Activated B cell treated with CpG ODN at 0.5 μM for 24 hours (primary cell): ENCODE measurements at regions of chr4 and their contacts with region 1.

Region 1: GRCh38 chr4:173168396-173169177 is at the start of gene GALNT7:
- DNase-seq: peak; percentile 46
- ATAC-seq: peak; percentile 45
- H3K4me3 Mint-ChIP-seq: peak within 1 kb of the TSS; percentile 96
- H3K27ac Mint-ChIP-seq: peak within 1 kb of the TSS; percentile 85
- H3K4me1 Mint-ChIP-seq: peaks cover 39% of the 10 kb centered on the region
- H3K27me3 Mint-ChIP-seq: no peaks in the 10 kb centered on the region
- CTCF ChIP-seq: no peak
- total RNA-seq, gene GALNT7: 15.3 and 16.9 TPM in 2 replicates

Region 2: DNA sequence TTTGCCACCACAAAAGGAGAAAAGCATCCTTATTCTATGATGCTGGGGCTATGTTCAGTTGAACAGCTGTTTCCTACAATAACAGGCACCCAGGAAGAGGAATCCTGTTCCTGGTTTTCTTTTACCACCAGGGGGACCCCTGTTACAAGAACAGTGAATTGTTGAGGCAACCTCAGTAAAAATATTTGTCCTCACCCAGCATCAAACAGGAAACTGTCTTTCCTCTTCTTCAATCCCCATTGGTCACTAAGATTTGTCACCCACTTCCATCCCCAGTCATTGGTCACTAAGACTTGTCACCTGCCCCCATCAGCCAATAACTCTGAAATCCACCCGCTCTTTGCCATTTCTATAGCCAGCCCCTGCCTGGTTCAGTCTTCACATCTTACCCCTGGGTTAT is 143.5 kb before region 1 on chr4:
- CTCF ChIA-PET with region 1: interaction called, 3 read pairs
- POLR2A ChIA-PET with region 1: no interaction called
- intact Hi-C with region 1: loop called (anchors 1 kb)
- DNase-seq: no peak
- ATAC-seq: no peak
- H3K4me3 Mint-ChIP-seq: no peak overlapping the region
- H3K27ac Mint-ChIP-seq: no peak overlapping the region
- H3K4me1 Mint-ChIP-seq: peaks cover 3% of the 10 kb centered on the region
- H3K27me3 Mint-ChIP-seq: no peaks in the 10 kb centered on the region
- CTCF ChIP-seq: no peak

Region 3: DNA sequence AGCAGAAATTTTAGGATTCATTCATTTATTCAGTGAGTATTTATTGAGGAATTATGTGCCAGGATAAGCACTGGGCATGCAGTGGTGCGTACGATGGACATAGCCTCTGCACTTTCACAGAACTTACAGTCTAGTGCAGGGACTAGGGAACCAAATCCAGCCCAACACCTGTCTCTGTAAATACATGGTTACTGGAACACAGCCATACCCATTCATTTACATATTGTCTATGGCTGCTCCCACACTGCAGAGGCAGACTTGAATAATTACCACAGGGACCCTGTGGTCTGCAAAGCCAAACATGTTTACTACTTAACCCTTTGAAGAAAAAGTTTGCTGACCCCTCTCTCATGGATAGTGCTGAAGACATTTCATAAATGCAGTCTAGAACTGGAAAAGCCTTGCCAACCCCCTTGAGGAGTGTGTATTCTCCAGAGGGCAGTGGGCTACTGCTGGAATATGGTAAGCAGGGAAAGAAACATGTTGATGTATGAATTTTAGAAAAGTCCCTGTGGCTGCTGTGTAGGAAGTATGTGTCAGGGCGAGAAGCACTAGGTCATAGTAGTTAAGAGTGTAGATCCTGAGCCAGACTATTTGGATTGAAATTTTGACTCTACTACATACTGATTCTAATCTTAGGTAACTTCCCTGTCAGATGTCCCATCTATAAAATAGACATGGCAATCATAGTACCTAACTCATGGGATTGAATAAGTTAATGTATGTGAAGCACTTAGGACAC is 75.5 kb after region 1 on chr4:
- CTCF ChIA-PET with region 1: interaction called, 3 read pairs
- POLR2A ChIA-PET with region 1: no interaction called
- intact Hi-C with region 1: loop called (anchors 2 kb)
- DNase-seq: no peak
- ATAC-seq: no peak
- H3K4me3 Mint-ChIP-seq: no peak overlapping the region
- H3K27ac Mint-ChIP-seq: no peak overlapping the region
- H3K4me1 Mint-ChIP-seq: peaks cover 54% of the 10 kb centered on the region
- H3K27me3 Mint-ChIP-seq: no peaks in the 10 kb centered on the region
- CTCF ChIP-seq: no peak

Region 4: DNA sequence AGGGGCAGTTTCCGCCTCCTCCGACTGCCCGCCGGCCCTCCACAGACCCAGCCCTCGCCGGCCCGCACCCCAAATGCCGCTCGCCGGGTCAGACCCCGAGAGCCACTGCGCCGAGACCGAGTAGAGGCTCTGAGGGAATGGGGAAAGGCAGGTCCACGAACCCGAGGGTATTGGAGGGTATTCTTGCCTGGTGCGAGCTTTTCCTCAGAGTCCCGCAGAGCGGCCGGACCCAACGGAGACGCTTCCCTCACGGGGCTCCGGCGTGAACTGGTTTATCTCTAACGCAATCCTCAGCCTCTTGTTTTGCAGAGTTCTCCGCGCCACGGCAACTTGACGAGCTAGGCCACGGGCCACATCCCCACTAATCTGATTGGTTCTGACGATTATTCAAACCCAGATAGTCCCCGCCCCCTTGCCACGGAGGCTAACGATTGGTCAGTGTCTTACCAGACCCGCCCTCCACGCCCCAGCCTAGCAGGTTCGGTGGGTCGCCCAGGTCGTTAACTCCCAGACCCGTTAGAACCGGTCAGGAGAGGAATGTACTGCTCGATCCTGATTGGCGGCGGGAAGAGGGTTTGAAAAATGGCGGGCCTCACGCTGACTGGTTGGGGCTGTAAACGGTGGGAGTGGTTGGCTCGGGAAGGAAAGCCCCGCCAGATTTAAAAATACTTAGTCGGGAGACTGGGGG is 165.6 kb after region 1 on chr4 and contains the start of gene HMGB2:
- CTCF ChIA-PET with region 1: interaction called, 3 read pairs
- POLR2A ChIA-PET with region 1: interaction called, 17 read pairs
- intact Hi-C with region 1: loop called (anchors 1 kb)
- DNase-seq: peak; percentile 95
- ATAC-seq: peak; percentile 93
- H3K4me3 Mint-ChIP-seq: peak within 1 kb of the TSS; percentile 96
- H3K27ac Mint-ChIP-seq: peak within 1 kb of the TSS; percentile 98
- H3K4me1 Mint-ChIP-seq: peaks cover 25% of the 10 kb centered on the region
- H3K27me3 Mint-ChIP-seq: no peaks in the 10 kb centered on the region
- CTCF ChIP-seq: no peak
- total RNA-seq, gene HMGB2: 63.2 and 63.9 TPM in 2 replicates

Region 5: DNA sequence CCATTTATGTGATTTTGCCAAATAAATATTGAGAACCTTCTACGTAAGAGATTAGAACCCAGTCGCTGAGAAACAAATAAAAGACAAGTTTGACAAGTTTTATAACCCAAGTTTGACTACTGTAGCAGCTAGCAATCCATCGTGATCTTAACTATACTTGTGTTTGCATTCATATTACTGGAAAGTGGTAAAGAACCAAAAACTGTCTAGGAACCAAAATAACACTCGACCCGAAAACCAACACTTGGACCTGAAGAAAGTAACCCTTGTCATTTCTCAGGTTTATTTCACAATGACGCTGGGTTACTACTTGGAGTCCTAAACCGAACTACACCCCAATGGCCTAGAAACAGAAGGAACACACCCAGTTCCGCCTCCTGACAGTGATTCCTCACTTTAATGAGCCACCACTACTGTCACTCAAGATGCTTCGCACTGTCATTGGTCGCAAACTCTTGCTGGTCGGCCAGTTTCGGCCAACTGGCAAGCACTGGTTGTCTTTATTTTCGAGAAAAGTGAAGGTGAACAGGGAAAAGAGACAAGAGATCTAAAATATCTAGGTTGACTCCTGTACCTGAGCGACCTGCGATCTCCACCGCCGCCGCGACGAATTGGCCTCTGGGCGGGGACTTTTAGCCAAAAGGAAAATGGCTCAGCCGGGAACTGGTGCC is 1114.4 kb after region 1 on chr4:
- CTCF ChIA-PET with region 1: no interaction called
- POLR2A ChIA-PET with region 1: interaction called, 5 read pairs
- intact Hi-C with region 1: loop called (anchors 5 kb)
- DNase-seq: peak; percentile 54
- ATAC-seq: peak; percentile 96
- H3K4me3 Mint-ChIP-seq: peak overlapping the region; percentile 99
- H3K27ac Mint-ChIP-seq: peak overlapping the region; percentile 99
- H3K4me1 Mint-ChIP-seq: peaks cover 58% of the 10 kb centered on the region
- H3K27me3 Mint-ChIP-seq: no peaks in the 10 kb centered on the region
- CTCF ChIP-seq: no peak